Cardiac septum (tissue), 1 donor: ENCODE measurements at regions of chr17 and their contacts with region 1.

Region 1: GRCh38 chr17:41811549-41812380 is at the start of gene P3H4:
- DNase-seq: peak; percentile 83
- total RNA-seq, gene P3H4: 5.1 TPM

Region 2: GRCh38 chr17:41864836-41865595 is 53.3 kb after region 1 on chr17 and contains the start of gene KLHL11:
- intact Hi-C with region 1: loop called (anchors 10 kb)
- DNase-seq: peak; percentile 95
- total RNA-seq, gene KLHL11: 5.1 TPM